Activated CD4-positive, alpha-beta T cell treated with anti-CD3 and anti-CD28 coated beads for 36 hours (primary cell): ENCODE measurements at regions of chr16 and their contacts with region 1.

Region 1: GRCh38 chr16:89490387-89491237 is at the start of gene ANKRD11:
- DNase-seq: peak; percentile 99
- ATAC-seq: peak; percentile 93
- H3K4me3 Mint-ChIP-seq: peak within 1 kb of the TSS; percentile 87
- H3K27ac Mint-ChIP-seq: peak within 1 kb of the TSS; percentile 92
- H3K4me1 Mint-ChIP-seq: peaks cover 44% of the 10 kb centered on the region
- H3K27me3 Mint-ChIP-seq: no peaks in the 10 kb centered on the region
- total RNA-seq, gene ANKRD11: 144 to 145 TPM

Region 2: DNA sequence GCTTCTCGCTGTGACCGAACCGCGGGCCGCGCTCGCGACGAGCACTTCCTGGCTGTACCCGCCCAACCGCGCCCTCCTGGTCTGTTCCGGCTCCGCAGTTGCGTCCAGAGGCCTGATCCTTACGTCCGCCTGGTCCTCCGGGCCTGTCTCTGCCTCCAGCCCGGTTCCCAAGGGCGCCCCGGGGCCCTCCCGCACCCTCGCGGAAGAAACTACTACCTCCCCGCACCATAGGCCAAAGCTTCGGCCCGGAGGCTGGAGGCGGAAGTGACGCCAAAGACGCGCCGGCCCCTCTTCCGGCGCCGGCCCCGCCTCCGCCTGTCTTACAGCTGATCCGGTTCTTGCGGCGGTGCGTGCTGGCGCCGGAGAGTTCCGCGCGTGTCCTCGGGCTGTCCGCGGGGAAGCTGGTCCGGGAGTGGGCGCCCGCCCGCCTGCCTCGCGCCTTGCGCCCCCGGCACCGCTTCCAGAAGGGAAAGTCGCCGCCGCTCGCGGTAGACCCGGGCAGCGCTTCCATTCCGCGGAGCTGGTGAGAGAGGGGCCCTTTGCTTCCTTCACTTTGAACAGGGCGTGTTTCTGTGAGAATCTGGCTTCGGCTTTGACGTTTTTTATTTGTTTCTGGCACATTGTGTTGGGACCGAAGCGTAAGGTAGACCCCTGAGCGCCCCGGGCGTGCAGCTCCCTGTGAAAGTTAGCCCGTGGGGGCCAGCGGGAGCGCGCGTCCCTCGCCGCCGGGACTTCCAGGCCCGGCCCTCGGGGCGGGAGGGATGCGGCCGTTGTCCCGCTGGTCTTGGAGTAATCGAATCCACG is 273.0 kb before region 1 on chr16 and contains the start of gene ZNF778:
- CTCF ChIA-PET with region 1: no interaction called
- POLR2A ChIA-PET with region 1: no interaction called
- intact Hi-C with region 1: loop called in 1 of 2 experiments (anchors 1 kb)
- DNase-seq: peak; percentile 89
- ATAC-seq: peak; percentile 81
- H3K4me3 Mint-ChIP-seq: peak within 1 kb of the TSS; percentile 83
- H3K27ac Mint-ChIP-seq: peak within 1 kb of the TSS; percentile 93
- H3K4me1 Mint-ChIP-seq: peaks cover 19% of the 10 kb centered on the region
- H3K27me3 Mint-ChIP-seq: no peaks in the 10 kb centered on the region
- total RNA-seq, gene ZNF778: 4.7 to 5.0 TPM

Region 3: DNA sequence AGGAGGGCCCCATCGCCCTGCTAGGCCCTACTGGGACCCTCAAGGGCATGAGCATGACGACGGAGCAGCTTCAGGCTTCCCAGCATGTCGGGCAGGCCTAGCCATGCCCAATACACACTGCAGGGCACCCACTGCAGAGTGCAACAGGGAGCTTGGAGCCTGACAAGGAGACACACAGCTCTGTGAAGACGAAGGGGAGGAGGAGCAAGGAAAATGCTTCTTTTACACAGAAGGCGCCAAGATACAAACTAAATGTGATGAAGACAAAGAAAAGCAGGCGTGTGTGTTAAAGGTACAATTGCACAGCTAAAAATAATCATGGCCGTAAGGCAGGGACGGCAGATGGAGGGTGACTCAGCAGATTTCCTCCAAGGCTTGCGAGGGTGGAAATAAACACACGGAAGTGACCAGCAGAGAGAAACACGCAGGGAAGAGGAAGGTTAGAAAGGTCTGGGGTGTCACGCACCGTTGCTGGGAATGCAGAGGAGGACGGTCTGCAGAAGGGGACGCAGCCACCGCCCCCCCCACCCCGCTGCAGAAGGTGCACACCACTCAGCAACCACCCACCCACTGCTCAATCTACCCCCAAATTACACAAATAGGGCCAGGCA is 164.6 kb before region 1 on chr16:
- CTCF ChIA-PET with region 1: interaction called, 3 read pairs
- POLR2A ChIA-PET with region 1: interaction called, 4 read pairs
- intact Hi-C with region 1: loop called (anchors 2 to 5 kb)
- DNase-seq: no peak
- ATAC-seq: no peak
- H3K4me3 Mint-ChIP-seq: no peak overlapping the region
- H3K27ac Mint-ChIP-seq: peak overlapping the region; percentile 77
- H3K4me1 Mint-ChIP-seq: peaks cover 87% of the 10 kb centered on the region
- H3K27me3 Mint-ChIP-seq: no peaks in the 10 kb centered on the region

Region 4: GRCh38 chr16:89363621-89364393 is 126.8 kb before region 1 on chr16:
- CTCF ChIA-PET with region 1: no interaction called
- POLR2A ChIA-PET with region 1: no interaction called
- intact Hi-C with region 1: loop called in 1 of 2 experiments (anchors 1 kb)
- DNase-seq: peak; percentile 64
- ATAC-seq: peak; percentile 20
- H3K4me3 Mint-ChIP-seq: peak overlapping the region; percentile 27
- H3K27ac Mint-ChIP-seq: peak overlapping the region; percentile 85
- H3K4me1 Mint-ChIP-seq: peaks cover 94% of the 10 kb centered on the region
- H3K27me3 Mint-ChIP-seq: no peaks in the 10 kb centered on the region

Region 5: DNA sequence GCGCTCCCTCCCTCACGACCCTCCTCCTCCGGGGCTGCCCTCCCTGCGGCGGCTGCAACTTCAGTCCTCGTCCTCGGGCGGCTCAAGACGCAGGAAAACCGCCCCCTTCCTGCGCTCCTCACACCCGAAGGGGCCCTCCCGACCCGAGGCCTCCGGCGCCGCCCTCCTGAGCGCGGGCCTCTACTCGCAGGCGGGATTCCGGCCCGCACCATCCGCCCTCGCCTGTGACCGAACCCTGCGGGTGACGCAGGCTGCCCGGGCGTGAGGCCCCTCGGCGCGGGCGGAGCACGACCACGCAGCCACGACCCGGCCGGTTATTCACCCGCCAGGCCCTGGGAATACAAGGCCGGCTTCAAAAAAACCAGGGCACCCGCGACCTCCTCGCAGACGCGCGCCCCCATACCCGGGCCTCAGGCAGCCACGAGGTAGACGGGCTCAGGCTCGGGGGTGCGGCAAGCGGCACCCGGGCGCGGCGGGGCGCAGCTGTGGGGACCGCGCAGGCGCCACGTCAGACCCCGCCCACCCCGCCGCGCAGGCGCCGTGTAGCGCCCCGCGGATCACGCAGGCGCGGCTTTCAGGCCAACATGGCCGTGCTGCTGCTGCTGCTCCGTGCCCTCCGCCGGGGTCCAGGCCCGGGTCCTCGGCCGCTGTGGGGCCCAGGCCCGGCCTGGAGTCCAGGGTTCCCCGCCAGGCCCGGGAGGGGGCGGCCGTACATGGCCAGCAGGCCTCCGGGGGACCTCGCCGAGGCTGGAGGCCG is 17.4 kb after region 1 on chr16 and contains the start of gene SPG7:
- CTCF ChIA-PET with region 1: interaction called, 4 read pairs
- POLR2A ChIA-PET with region 1: interaction called, 7 read pairs
- intact Hi-C with region 1: loop called (anchors 1 kb)
- DNase-seq: peak; percentile 94
- ATAC-seq: peak; percentile 74
- H3K4me3 Mint-ChIP-seq: peak within 1 kb of the TSS; percentile 90
- H3K27ac Mint-ChIP-seq: peak within 1 kb of the TSS; percentile 97
- H3K4me1 Mint-ChIP-seq: peaks cover 31% of the 10 kb centered on the region
- H3K27me3 Mint-ChIP-seq: no peaks in the 10 kb centered on the region
- total RNA-seq, gene SPG7: 68.6 to 76.7 TPM

Region 6: DNA sequence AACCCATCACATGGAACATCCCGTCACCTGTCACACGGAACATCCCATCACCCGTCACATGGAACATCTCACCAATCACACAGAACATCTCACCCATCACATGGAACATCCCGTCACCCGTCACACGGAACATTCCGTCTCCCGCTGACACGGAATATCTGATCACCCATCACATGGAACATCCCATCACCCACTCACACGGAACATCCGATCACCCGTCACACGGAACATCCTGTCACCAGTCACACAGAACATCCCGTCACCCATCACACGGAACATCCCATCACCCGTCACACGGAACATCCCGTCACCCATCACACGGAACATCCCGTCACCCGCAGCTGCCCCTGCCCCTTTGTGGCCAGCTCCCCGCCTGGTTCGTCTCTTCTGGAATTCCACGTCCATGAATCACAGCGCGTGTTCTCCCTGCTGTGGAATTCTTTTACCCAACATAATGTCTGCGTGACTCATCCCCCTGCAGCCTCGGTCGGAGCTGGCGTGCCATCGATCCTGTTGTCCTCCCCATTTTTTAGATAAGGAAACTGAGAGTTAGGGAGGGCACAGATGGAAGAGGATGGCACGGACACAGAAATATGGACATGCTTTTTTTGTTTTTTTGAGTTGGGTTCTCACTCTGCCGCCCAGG is 90.6 kb after region 1 on chr16:
- CTCF ChIA-PET with region 1: no interaction called
- POLR2A ChIA-PET with region 1: no interaction called
- intact Hi-C with region 1: no loop called
- DNase-seq: no peak
- ATAC-seq: no peak
- H3K4me3 Mint-ChIP-seq: no peak overlapping the region
- H3K27ac Mint-ChIP-seq: no peak overlapping the region
- H3K4me1 Mint-ChIP-seq: no peaks in the 10 kb centered on the region
- H3K27me3 Mint-ChIP-seq: no peaks in the 10 kb centered on the region

Region 7: DNA sequence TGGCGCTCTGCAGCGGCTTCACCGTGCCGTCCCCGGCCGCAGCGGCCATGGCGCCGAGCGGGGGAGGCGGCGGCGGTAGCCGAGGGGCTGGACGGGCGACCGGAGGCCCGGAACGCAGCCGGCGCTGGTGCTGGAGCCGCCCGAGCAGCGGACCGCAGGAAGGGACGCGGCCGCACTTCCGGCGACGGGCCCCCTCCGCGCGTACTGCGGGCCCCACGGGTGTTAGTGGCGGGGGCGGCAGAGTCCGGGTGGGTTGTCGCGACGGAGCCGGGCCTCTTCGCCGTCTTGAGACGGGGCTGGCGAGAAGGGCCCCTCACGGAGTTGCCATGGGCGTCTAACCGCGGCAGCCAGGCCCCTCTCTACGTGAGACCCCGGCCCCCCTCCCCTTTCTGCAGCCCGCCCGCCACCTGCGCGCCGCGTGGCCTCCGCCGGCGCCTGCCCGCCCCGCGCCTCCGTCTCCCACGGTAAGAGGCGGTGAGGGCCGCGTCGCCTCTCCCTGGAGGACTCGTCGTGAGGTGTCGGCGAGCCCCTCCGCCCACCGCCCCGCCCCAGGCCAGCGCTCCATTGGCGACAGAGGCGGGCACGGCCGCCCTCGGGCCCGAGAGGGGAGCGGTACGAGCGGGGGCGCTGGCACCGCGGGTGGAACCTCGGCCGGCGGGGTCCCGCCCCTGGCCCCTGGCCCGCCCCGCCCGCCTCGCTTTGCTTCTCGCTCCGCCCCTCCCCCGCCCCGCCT is 230.4 kb after region 1 on chr16 and contains the starts of genes VPS9D1 and ZNF276:
- CTCF ChIA-PET with region 1: no interaction called
- POLR2A ChIA-PET with region 1: no interaction called
- intact Hi-C with region 1: loop called in 1 of 2 experiments (anchors 1 kb)
- DNase-seq: peak; percentile 92
- ATAC-seq: peak; percentile 49
- H3K4me3 Mint-ChIP-seq: peak within 1 kb of the TSS; percentile 85
- H3K27ac Mint-ChIP-seq: peak within 1 kb of the TSS; percentile 84
- H3K4me1 Mint-ChIP-seq: peaks cover 40% of the 10 kb centered on the region
- H3K27me3 Mint-ChIP-seq: no peaks in the 10 kb centered on the region
- total RNA-seq, gene VPS9D1: 2.0 to 2.6 TPM
- total RNA-seq, gene ZNF276: 21.3 to 24.8 TPM